ENCODE measurements at regions of chr3 and their contacts with region 1.

Region 1: GRCh38 chr3:108022256-108023097 is 68.4 kb downstream of the CD47 start:
- DNase-seq: no peak
- H3K4me3 ChIP-seq: no peak overlapping the region
- H3K27ac ChIP-seq: no peak overlapping the region
- H3K4me1 ChIP-seq: peaks cover 16% of the 10 kb centered on the region
- H3K27me3 ChIP-seq: peaks cover 0 to 4% of the 10 kb centered on the region in 2 experiments
- CTCF ChIP-seq: no peak
- POLR2A ChIP-seq: no peak

Region 2: DNA sequence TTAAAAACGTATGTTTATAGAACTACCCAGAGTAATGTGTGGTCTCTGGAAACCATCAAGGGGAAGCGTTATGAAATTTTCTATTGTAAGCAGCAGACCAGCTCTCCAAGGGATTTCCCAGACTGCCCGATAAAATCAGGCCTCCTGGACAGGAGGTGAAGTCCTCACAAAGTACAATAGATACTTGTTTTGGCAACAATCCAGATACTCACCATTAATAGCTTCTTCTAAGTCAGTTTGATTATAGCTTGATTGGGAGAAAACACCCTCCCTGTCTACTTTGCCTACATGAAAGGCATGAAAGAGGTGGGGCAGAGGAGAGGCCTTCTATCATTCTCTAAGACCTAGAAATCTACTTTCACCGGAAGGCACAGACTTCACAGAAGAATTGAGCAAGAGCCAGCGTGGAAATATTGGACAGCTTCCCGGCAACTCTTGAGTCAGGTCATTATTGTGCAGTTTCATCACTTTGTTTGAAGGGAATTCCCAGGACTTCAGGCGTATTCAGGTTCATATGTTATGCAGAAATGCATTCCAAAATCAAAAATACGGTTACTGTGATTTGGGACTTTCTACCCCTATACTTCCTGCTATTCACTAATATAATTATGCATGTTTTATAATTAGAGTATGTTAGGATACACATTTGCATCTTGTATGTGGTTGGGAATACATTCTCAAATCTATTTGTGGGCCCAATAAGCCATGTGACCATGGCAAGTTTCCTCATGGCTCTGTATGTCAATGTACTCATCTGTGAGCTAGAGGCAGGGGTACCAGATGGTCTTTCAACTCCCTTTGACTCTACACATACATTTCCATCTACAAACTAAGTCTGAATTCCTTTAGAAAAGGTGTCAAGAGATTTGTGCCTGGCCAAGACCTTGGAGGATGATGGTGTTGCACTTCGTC is 35.2 kb before region 1 on chr3:
- CTCF ChIA-PET with region 1: interaction called, 4 read pairs
- POLR2A ChIA-PET with region 1: no interaction called
- dilution Hi-C with region 1: no loop called
- intact Hi-C with region 1: loop called (anchors 5 kb)
- DNase-seq: peak; percentile 95
- H3K4me3 ChIP-seq: no peak overlapping the region
- H3K27ac ChIP-seq: peak overlapping the region; percentile 47
- H3K4me1 ChIP-seq: peaks cover 33% of the 10 kb centered on the region
- H3K27me3 ChIP-seq: no peaks in the 10 kb centered on the region
- CTCF ChIP-seq: no peak
- POLR2A ChIP-seq: no peak

Region 3: DNA sequence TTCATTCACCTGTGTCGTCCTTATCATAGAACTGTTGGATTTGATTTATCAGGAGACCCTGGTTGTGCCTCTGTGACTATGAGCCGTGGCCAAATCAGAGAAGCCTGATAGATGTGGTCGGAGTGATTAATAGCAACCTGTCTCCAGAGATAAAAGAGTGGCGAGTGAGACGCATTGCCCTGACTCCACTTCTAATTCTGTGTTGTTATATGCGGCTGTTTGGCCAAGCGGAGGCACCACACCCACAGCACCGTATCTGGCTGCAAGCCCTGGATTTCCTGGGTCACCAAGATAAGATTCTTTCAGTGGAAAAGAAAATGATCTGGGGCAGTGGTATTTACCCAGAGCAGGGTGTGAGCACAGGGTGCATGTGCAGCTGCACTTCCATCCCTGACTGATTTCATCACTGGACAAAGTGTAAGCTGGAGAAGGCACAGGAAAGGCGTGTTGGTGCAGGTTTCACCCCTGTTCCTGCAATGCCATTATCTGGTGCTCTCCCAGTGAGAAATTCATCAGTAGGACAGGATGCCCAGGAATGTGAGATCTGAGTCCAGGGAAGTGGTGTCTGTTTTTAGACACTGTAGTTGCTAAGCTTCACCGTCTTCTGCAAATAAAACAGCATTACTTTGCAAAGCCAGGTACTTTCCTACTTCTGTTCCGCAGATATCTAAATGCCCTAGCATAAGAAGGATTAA is 16.3 kb before region 1 on chr3:
- CTCF ChIA-PET with region 1: interaction called, 11 read pairs
- POLR2A ChIA-PET with region 1: no interaction called
- dilution Hi-C with region 1: no loop called
- intact Hi-C with region 1: no loop called
- DNase-seq: peak; percentile 60
- H3K4me3 ChIP-seq: no peak overlapping the region
- H3K27ac ChIP-seq: no peak overlapping the region
- H3K4me1 ChIP-seq: peaks cover 12% of the 10 kb centered on the region
- H3K27me3 ChIP-seq: no peaks in the 10 kb centered on the region
- CTCF ChIP-seq: no peak
- POLR2A ChIP-seq: no peak

Region 4: DNA sequence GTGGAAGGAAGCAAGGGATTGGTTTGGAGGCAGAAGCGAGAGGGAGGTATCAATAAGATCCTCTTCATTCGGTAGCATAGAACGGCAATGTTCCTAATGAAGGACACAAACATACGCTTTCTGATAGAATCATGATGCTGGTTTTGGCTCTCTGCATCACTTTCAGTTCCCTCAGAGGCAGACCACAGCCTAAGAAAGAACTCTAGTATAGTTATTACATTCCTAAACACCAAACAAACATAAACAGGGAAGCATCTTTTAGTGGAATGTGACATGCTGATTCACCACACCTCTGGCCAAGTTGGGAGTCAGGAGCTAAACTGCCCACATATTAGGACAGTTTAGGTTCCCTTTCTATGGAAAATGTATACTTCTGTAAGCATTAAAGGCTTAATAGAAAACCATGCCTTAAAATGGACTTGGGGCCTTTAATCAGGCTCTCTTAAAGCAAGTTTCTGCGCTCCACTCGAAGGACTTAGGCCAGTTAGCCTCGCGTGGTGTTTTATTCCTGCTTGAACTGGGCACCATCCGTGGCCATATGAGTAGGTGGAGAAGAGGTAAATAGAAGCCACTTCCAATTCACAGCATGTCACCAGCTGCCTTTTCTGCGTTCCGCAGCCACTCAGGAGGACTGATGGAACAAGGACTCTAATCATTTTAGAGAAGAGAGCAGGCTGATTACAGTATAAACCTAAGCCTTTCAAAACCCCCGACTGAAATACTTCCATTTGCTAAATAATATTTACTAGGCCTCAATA is 14.7 kb after region 1 on chr3:
- CTCF ChIA-PET with region 1: interaction called, 5 read pairs
- POLR2A ChIA-PET with region 1: no interaction called
- dilution Hi-C with region 1: no loop called
- intact Hi-C with region 1: loop called (anchors 1 kb)
- DNase-seq: no peak
- H3K4me3 ChIP-seq: no peak overlapping the region
- H3K27ac ChIP-seq: no peak overlapping the region
- H3K4me1 ChIP-seq: peaks cover 21% of the 10 kb centered on the region
- H3K27me3 ChIP-seq: no peaks in the 10 kb centered on the region
- CTCF ChIP-seq: no peak
- POLR2A ChIP-seq: no peak